Esophagus squamous epithelium (tissue), 5 donors: ENCODE measurements at regions of chr4 and their contacts with region 1.

Region 1: DNA sequence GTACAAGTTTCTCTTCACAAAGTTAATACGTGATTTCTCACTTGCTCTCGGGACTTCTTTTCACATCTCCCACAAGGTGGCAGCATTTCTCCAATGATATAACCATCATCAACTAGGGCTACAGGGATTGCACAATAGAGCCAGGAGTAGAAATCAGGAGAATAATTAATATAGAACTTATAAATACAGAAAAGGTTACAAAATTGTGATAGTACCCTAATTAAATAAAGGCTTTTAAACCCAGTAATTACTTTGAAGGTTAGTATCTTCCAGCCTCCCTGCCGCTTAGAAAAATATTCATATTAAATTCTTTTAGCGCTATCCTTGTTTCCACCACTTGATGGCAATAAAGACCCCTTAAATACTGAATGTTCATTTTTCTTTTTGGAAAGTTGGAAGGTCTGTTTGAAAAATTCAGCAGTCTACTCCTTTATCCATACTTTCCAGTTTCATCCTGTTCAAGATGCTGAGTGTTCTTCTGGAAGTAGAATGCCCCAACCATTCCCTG is 65.8 kb downstream of the RASGEF1B start:
- DNase-seq: no peak
- H3K4me3 ChIP-seq: peak overlapping the region in 1 of 4 donors; percentile 34
- H3K27ac ChIP-seq: no peak overlapping the region
- H3K4me1 ChIP-seq: peaks cover 0 to 13% (median 0%) of the 10 kb centered on the region in 3 donors
- H3K27me3 ChIP-seq: peaks cover 0 to 12% (median 0%) of the 10 kb centered on the region in 4 donors
- CTCF ChIP-seq: peak; percentile 63 to 89 (median 80)
- POLR2A ChIP-seq: no peak

Region 2: GRCh38 chr4:82201805-82202641 is 796.1 kb after region 1 on chr4:
- intact Hi-C with region 1: loop called (anchors 5 kb)
- DNase-seq: no peak
- H3K4me3 ChIP-seq: no peak overlapping the region
- H3K27ac ChIP-seq: no peak overlapping the region
- H3K4me1 ChIP-seq: no peaks in the 10 kb centered on the region
- H3K27me3 ChIP-seq: no peaks in the 10 kb centered on the region
- CTCF ChIP-seq: peak; percentile 27 to 80 (median 49)
- POLR2A ChIP-seq: no peak

Region 3: DNA sequence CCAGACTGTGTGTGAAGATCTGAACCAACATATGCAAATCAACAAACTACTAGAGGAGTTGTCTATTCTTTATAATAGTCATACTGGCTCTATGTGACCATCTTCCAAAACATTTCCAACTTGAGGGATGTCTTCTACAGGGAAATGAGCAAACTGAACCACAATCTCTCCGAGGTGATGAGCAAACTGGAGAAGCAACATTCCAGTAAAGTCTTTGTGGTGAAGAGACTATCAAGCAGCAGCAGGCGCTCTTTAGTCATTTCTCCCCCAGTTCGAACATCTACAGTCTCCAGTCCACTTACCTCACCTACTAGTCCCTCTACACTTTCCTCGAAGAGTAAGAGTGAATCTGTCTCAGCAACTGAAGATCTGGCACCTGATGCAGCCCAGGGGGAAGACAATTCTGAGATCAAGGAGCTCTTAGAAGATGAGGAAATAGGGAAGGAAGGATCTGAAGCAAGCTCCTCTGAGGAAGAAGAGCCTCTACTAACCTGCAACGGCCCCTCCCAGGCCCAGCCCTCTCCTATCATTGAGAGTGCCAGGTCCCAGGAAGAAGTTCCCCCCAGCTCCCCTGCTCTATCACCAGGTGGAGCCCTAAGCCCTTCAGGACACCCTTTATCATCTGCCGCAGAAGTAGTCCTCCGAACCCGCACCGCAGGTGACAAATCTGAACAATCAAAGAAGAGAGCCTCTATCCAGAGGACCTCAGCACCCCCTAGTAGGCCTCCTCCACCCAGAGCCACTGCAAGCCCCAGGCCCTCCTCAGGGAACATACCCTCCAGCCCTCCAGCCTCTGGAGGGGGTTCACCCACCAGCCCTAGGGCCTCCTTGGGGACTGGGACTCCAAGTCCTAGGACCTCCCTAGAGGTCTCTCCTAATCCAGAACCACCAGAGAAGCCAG is 869.7 kb after region 1 on chr4:
- intact Hi-C with region 1: loop called (anchors 10 kb)
- DNase-seq: no peak
- H3K4me3 ChIP-seq: no peak overlapping the region
- H3K27ac ChIP-seq: no peak overlapping the region
- H3K4me1 ChIP-seq: no peaks in the 10 kb centered on the region
- H3K27me3 ChIP-seq: no peaks in the 10 kb centered on the region
- CTCF ChIP-seq: no peak
- POLR2A ChIP-seq: no peak